Stomach (tissue), 19 donors: ENCODE measurements at regions of chr21 and their contacts with region 1.

Region 1: GRCh38 chr21:14403681-14404318 is 20.9 kb upstream of the HSPA13 start:
- DNase-seq: peak in 1 of 2 donors; percentile 75
- H3K4me3 ChIP-seq: no peak overlapping the region
- H3K27ac ChIP-seq: no peak overlapping the region
- H3K4me1 ChIP-seq: no peaks in the 10 kb centered on the region
- H3K27me3 ChIP-seq: no peaks in the 10 kb centered on the region
- CTCF ChIP-seq: peak in 3 of 7 experiments; percentile 33 to 44 (median 37)
- EP300 ChIP-seq: no peak
- POLR2A ChIP-seq: no peak

Region 2: DNA sequence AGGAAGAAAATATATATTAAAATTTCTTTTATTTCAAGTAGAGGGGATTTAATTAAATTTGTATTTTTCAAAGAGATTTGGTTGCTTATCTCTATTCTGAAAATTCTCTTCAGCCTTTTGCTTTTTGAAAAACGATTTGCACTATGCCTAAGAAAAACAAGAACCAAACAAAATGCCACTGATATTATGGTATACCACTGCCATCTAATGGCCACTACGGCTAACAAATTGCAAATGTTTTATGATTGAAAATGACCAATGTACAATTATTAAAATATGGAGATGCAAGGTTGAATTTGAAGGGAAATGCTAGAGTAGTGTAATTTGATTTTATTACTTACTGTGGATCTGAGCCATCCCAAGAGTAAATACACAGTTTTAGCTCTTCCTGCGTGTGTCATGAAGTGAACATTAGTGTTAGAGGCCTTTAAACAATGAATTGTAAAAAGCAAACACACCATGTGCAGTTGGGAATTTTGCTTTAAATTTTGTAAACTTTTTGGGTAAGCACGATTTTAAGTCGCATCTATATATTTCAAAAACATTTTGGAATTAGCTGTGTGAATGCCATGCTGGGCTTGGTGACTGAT is 1188.6 kb after region 1 on chr21:
- intact Hi-C with region 1: loop called (anchors 10 kb)
- DNase-seq: peak in 1 of 2 donors; percentile 80
- H3K4me3 ChIP-seq: no peak overlapping the region
- H3K27ac ChIP-seq: no peak overlapping the region
- H3K4me1 ChIP-seq: no peaks in the 10 kb centered on the region
- H3K27me3 ChIP-seq: no peaks in the 10 kb centered on the region
- CTCF ChIP-seq: peak in 5 of 7 experiments; percentile 9 to 69 (median 48)
- EP300 ChIP-seq: no peak
- POLR2A ChIP-seq: no peak